ENCODE measurements at regions of chr1 and their contacts with region 1.

Region 1: GRCh38 chr1:24351918-24352627 is 32.9 kb downstream of the GRHL3 start:
- DNase-seq: peak; percentile 94
- H3K4me3 Mint-ChIP-seq: no peak overlapping the region
- H3K27ac Mint-ChIP-seq: peak overlapping the region; percentile 70
- H3K4me1 Mint-ChIP-seq: peaks cover 40% of the 10 kb centered on the region
- H3K27me3 Mint-ChIP-seq: no peaks in the 10 kb centered on the region

Region 2: GRCh38 chr1:23878668-23879067 is 473.4 kb before region 1 on chr1:
- CTCF ChIA-PET with region 1: no interaction called
- intact Hi-C with region 1: no loop called
- DNase-seq: no peak
- H3K4me3 Mint-ChIP-seq: no peak overlapping the region
- H3K27ac Mint-ChIP-seq: no peak overlapping the region
- H3K4me1 Mint-ChIP-seq: no peaks in the 10 kb centered on the region
- H3K27me3 Mint-ChIP-seq: no peaks in the 10 kb centered on the region

Region 3: GRCh38 chr1:24277420-24278169 is 74.5 kb before region 1 on chr1:
- CTCF ChIA-PET with region 1: no interaction called
- intact Hi-C with region 1: loop called (anchors 1 kb)
- DNase-seq: peak; percentile 54
- H3K4me3 Mint-ChIP-seq: no peak overlapping the region
- H3K27ac Mint-ChIP-seq: no peak overlapping the region
- H3K4me1 Mint-ChIP-seq: peaks cover 9% of the 10 kb centered on the region
- H3K27me3 Mint-ChIP-seq: peaks cover 14% of the 10 kb centered on the region

Region 4: DNA sequence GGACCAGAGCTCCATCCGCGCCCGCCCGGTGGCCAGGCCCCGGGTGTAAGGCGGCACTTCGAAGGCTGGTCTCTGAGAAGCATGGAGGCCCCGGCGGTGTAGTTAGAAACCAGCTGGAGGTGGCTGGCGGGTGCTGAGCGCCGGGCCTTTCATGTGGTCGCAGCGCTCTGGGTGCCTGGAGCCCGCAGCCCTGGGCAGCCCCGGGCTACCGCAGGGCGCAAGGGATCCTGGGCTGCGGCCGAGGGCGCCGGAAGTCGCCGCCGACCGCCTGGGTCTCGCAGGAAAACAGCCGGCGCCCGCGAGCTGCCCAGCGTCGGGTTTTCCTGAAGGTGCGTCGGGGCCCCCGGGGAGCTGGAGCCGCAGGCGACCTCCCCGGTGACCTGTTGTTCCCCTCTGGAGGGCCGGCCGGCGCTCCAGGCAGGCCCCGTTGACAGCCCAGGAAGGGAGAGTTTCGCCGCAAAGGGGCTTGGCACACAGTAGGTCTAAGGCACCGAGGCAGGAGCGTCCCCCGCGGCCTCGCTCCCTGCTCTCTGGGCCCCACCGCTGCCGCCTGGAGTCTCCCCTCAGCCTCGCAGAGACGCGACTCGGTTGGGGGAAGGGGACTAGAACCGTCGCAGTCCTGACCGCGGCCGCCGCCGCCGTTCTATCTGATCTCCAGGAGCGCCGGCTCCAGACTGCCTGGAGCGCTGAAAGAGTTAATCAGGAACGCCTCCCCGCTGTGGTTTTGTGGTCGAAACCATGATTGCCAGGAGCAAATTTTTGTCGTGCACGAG is 30.2 kb before region 1 on chr1:
- CTCF ChIA-PET with region 1: interaction called, 3 read pairs
- intact Hi-C with region 1: loop called (anchors 1 kb)
- DNase-seq: peak; percentile 88
- H3K4me3 Mint-ChIP-seq: peak overlapping the region; percentile 67
- H3K27ac Mint-ChIP-seq: no peak overlapping the region
- H3K4me1 Mint-ChIP-seq: peaks cover 41% of the 10 kb centered on the region
- H3K27me3 Mint-ChIP-seq: peaks cover 73% of the 10 kb centered on the region

Region 5: DNA sequence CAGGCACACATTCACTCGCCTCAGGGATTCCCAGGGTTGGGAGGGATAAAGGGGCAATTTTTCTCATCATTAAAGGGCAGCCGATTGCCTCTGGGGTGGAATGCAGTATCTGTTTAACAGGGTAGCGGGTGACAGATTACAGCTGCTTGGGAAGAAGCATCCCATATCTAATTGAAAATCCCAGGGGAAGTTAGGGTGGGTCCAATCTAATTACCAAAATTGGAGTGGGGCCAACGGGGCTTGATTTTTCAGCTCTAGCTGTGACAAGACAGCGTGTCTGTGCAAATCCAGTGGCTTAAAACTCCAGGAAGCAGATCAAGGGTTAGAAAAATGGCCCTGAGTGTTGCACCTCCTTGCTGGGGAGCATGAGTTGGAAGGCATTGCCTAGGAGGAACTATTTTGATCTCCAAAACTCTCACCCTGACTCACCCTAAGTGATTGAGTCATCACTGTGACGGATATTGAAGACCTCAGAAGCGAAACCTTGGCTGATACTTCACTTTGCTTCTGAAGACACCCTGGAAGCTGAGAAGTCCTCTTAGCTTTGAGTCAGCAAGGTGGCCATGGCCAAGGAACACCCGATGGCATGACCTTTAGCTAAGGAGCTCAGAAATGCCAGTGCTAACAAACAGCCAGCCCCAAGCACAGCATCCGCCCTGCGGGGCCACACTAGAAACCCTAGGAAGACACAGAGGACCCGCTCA is 13.1 kb after region 1 on chr1:
- CTCF ChIA-PET with region 1: no interaction called
- intact Hi-C with region 1: loop called (anchors 1 kb)
- DNase-seq: peak; percentile 63
- H3K4me3 Mint-ChIP-seq: no peak overlapping the region
- H3K27ac Mint-ChIP-seq: no peak overlapping the region
- H3K4me1 Mint-ChIP-seq: peaks cover 12% of the 10 kb centered on the region
- H3K27me3 Mint-ChIP-seq: no peaks in the 10 kb centered on the region

Region 6: DNA sequence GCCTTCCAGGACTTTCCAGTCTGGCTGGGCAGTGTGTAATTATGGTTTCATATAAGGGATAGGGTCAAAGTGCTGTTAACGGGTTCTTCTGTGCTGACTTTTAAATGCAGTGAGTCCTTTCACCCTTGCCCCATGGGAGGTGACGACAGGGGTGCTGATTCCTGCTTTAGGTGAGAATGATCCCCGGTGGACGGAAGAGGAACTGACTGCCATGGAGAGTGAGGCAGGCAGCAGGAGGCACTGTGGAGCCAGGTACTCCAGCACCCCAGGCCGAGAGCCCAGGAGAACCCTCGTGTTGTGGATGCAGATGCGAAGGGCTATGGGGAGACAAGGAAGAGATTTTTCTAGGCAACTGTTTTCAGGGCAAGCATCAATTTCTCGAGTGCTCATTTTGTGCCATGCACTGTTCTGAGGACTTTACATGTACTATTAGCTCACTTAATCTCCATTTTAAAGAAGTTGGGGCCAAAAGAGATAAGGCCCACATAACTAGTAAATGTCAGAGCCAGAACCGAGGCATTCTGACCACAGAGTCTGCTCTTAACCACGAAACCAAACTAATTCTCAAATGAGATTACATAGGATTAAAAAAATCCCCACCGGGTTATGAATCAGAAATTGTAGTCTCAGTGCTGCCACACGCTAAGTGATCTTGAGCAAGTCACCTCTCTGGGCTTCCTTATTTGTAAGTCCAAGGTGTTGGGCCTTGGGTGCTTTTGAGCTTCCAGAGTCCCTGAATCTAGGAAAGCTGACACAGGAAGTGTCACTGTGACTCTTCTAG is 33.3 kb after region 1 on chr1:
- CTCF ChIA-PET with region 1: interaction called, 4 read pairs
- intact Hi-C with region 1: loop called (anchors 1 kb)
- DNase-seq: peak; percentile 71
- H3K4me3 Mint-ChIP-seq: no peak overlapping the region
- H3K27ac Mint-ChIP-seq: no peak overlapping the region
- H3K4me1 Mint-ChIP-seq: peaks cover 21% of the 10 kb centered on the region
- H3K27me3 Mint-ChIP-seq: no peaks in the 10 kb centered on the region

Measured in activated naive CD4-positive, alpha-beta T cell treated with anti-CD3 and anti-CD28 coated beads for 36 hours (primary cell).